Spleen (tissue), 13 donors: ENCODE measurements at regions of chr11 and their contacts with region 1.

Region 1: DNA sequence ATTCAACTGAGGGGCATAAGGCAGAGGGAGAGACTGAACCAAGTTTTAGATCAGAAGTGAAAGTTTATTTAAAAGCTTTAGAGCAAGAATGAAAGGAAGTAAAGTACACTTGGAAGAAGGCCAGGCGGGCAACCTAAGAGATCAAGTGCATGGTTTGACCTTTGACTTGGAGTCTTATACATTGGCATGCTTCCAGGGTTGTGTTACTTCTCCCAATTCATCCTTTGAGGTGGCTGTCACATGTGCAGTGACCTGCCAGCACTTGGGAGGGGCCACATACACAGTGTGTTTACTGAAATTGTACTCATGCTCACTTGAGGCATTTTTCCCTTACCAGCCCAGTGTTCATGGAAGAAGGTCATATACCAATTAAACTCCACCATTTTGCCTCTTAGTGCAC is 30.4 kb downstream of the CYP2R1 start:
- DNase-seq: no peak
- H3K4me3 ChIP-seq: no peak overlapping the region
- H3K27ac ChIP-seq: no peak overlapping the region
- H3K4me1 ChIP-seq: no peaks in the 10 kb centered on the region
- H3K27me3 ChIP-seq: no peaks in the 10 kb centered on the region
- CTCF ChIP-seq: no peak
- POLR2A ChIP-seq: no peak

Region 2: GRCh38 chr11:14809466-14809865 is 52.2 kb before region 1 on chr11:
- intact Hi-C with region 1: loop called (anchors 10 kb)
- DNase-seq: no peak
- H3K4me3 ChIP-seq: no peak overlapping the region
- H3K27ac ChIP-seq: no peak overlapping the region
- H3K4me1 ChIP-seq: no peaks in the 10 kb centered on the region
- H3K27me3 ChIP-seq: no peaks in the 10 kb centered on the region
- CTCF ChIP-seq: no peak
- POLR2A ChIP-seq: no peak